ENCODE measurements at regions of chr12 and their contacts with region 1.

Region 1: DNA sequence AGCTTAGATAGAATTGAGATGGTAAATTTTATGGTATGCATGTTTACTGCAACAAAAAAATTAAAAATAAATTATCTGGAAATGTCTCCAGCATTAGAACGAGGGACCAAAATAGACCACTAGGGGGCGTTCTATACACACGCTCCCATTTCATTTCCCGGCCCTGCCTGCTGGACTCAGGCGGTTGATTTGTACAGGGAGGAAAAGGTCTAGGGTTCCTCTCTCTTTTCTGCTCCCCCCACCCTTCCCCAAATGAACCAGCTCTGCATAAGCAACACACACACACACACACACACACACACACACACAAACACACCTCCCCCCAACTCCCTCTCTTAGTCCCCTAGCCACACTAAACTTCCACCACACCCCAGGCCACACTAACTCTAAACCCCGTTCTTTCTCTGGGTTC is 7.8 kb upstream of the DTX1 start:
- DNase-seq: peak; percentile 49 to 72 (median 64)
- H3K4me3 ChIP-seq: no peak overlapping the region
- H3K4me3 Mint-ChIP-seq: no peak overlapping the region
- H3K27ac ChIP-seq: no peak overlapping the region
- H3K27ac Mint-ChIP-seq: peak overlapping the region in 2 of 7 donors; percentile 18 to 66
- H3K4me1 ChIP-seq: no peaks in the 10 kb centered on the region
- H3K4me1 Mint-ChIP-seq: peaks cover 11% of the 10 kb centered on the region
- H3K27me3 ChIP-seq: no peaks in the 10 kb centered on the region
- H3K27me3 Mint-ChIP-seq: peaks cover 5 to 35% (median 25%) of the 10 kb centered on the region in 3 donors
- CTCF ChIP-seq: peak; percentile 75

Region 2: GRCh38 chr12:112924986-112925385 is 123.7 kb before region 1 on chr12:
- intact Hi-C with region 1: no loop called
- DNase-seq: no peak
- H3K4me3 ChIP-seq: no peak overlapping the region
- H3K4me3 Mint-ChIP-seq: no peak overlapping the region
- H3K27ac ChIP-seq: peak overlapping the region in 1 of 2 donors; percentile 34
- H3K27ac Mint-ChIP-seq: peak overlapping the region in 1 of 7 donors; percentile 15
- H3K4me1 ChIP-seq: peaks cover 0 to 6% of the 10 kb centered on the region in 2 donors
- H3K4me1 Mint-ChIP-seq: peaks cover 12% of the 10 kb centered on the region
- H3K27me3 ChIP-seq: no peaks in the 10 kb centered on the region
- H3K27me3 Mint-ChIP-seq: peaks cover 0 to 2% (median 2%) of the 10 kb centered on the region in 3 donors
- CTCF ChIP-seq: no peak

Region 3: GRCh38 chr12:113082486-113083148 is 33.9 kb after region 1 on chr12:
- intact Hi-C with region 1: no loop called
- DNase-seq: no peak
- H3K4me3 ChIP-seq: no peak overlapping the region
- H3K4me3 Mint-ChIP-seq: no peak overlapping the region
- H3K27ac ChIP-seq: no peak overlapping the region
- H3K27ac Mint-ChIP-seq: no peak overlapping the region
- H3K4me1 ChIP-seq: no peaks in the 10 kb centered on the region
- H3K4me1 Mint-ChIP-seq: peaks cover 7% of the 10 kb centered on the region
- H3K27me3 ChIP-seq: peaks cover 13 to 20% of the 10 kb centered on the region in 2 donors
- H3K27me3 Mint-ChIP-seq: peaks cover 31 to 51% (median 37%) of the 10 kb centered on the region in 3 donors
- CTCF ChIP-seq: no peak

Region 4: GRCh38 chr12:113092607-113093408 is 44.1 kb after region 1 on chr12:
- intact Hi-C with region 1: no loop called
- DNase-seq: no peak
- H3K4me3 ChIP-seq: no peak overlapping the region
- H3K4me3 Mint-ChIP-seq: peak overlapping the region in 1 of 2 donors; percentile 58
- H3K27ac ChIP-seq: no peak overlapping the region
- H3K27ac Mint-ChIP-seq: no peak overlapping the region
- H3K4me1 ChIP-seq: no peaks in the 10 kb centered on the region
- H3K4me1 Mint-ChIP-seq: peaks cover 5% of the 10 kb centered on the region
- H3K27me3 ChIP-seq: peaks cover 2 to 23% of the 10 kb centered on the region in 2 donors
- H3K27me3 Mint-ChIP-seq: peaks cover 16 to 33% (median 26%) of the 10 kb centered on the region in 3 donors
- CTCF ChIP-seq: peak; percentile 8

Region 5: GRCh38 chr12:113152835-113153814 is 104.4 kb after region 1 on chr12:
- intact Hi-C with region 1: loop called (anchors 2 to 5 kb)
- DNase-seq: peak; percentile 71 to 75 (median 73)
- H3K4me3 ChIP-seq: peak overlapping the region; percentile 7 to 75 (median 37)
- H3K4me3 Mint-ChIP-seq: peak overlapping the region; percentile 73 to 83
- H3K27ac ChIP-seq: no peak overlapping the region
- H3K27ac Mint-ChIP-seq: no peak overlapping the region
- H3K4me1 ChIP-seq: peaks cover 13 to 34% of the 10 kb centered on the region in 2 donors
- H3K4me1 Mint-ChIP-seq: peaks cover 30% of the 10 kb centered on the region
- H3K27me3 ChIP-seq: peaks cover 31 to 64% of the 10 kb centered on the region in 2 donors
- H3K27me3 Mint-ChIP-seq: peaks cover 64 to 76% (median 72%) of the 10 kb centered on the region in 3 donors
- CTCF ChIP-seq: peak; percentile 59

Region 6: GRCh38 chr12:113174461-113175384 is 126.0 kb after region 1 on chr12:
- intact Hi-C with region 1: loop called (anchors 1 to 2 kb)
- DNase-seq: peak; percentile 49 to 55 (median 52)
- H3K4me3 ChIP-seq: no peak overlapping the region
- H3K4me3 Mint-ChIP-seq: no peak overlapping the region
- H3K27ac ChIP-seq: no peak overlapping the region
- H3K27ac Mint-ChIP-seq: peak overlapping the region in 1 of 7 donors; percentile 75
- H3K4me1 ChIP-seq: no peaks in the 10 kb centered on the region
- H3K4me1 Mint-ChIP-seq: no peaks in the 10 kb centered on the region
- H3K27me3 ChIP-seq: no peaks in the 10 kb centered on the region
- H3K27me3 Mint-ChIP-seq: peaks cover 0 to 4% (median 0%) of the 10 kb centered on the region in 3 donors
- CTCF ChIP-seq: peak; percentile 99